ENCODE measurements at regions of chr3 and their contacts with region 1.

Region 1: DNA sequence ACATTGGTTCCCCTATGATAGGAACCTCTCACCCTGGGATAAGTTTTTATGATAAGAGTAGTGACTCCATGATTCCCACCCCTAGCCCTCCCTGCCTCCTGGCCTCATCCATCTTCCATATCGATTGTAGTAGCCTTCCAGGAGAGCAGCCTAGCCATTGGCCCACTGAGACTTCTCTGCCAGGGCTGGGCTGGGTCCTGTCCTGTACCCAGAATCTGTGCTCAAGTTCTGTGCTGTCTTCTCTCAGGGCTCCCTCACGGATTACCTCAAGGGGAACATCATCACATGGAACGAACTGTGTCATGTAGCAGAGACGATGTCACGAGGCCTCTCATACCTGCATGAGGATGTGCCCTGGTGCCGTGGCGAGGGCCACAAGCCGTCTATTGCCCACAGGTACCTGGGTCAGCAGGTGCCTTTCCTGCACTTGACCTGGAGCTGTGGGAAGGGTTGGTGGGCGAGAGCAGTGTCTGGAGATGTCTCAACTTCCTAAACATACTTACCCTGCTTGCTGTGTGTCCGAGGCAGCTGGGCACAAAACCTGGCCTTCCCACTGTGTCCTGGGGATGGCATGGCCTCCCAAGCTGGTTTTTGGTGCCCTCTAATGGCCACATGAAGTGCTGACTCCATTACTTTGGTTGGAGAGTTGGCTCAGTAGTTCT is 16.6 kb upstream of the EXOG start:
- DNase-seq: peak; percentile 58
- H3K4me3 Mint-ChIP-seq: no peak overlapping the region
- H3K27ac Mint-ChIP-seq: no peak overlapping the region
- H3K4me1 Mint-ChIP-seq: no peaks in the 10 kb centered on the region
- H3K27me3 Mint-ChIP-seq: no peaks in the 10 kb centered on the region

Region 2: GRCh38 chr3:37892927-37893600 is 586.5 kb before region 1 on chr3:
- CTCF ChIA-PET with region 1: no interaction called
- POLR2A ChIA-PET with region 1: no interaction called
- DNase-seq: no peak
- H3K4me3 Mint-ChIP-seq: no peak overlapping the region
- H3K27ac Mint-ChIP-seq: no peak overlapping the region
- H3K4me1 Mint-ChIP-seq: no peaks in the 10 kb centered on the region
- H3K27me3 Mint-ChIP-seq: peaks cover 6% of the 10 kb centered on the region

Region 3: DNA sequence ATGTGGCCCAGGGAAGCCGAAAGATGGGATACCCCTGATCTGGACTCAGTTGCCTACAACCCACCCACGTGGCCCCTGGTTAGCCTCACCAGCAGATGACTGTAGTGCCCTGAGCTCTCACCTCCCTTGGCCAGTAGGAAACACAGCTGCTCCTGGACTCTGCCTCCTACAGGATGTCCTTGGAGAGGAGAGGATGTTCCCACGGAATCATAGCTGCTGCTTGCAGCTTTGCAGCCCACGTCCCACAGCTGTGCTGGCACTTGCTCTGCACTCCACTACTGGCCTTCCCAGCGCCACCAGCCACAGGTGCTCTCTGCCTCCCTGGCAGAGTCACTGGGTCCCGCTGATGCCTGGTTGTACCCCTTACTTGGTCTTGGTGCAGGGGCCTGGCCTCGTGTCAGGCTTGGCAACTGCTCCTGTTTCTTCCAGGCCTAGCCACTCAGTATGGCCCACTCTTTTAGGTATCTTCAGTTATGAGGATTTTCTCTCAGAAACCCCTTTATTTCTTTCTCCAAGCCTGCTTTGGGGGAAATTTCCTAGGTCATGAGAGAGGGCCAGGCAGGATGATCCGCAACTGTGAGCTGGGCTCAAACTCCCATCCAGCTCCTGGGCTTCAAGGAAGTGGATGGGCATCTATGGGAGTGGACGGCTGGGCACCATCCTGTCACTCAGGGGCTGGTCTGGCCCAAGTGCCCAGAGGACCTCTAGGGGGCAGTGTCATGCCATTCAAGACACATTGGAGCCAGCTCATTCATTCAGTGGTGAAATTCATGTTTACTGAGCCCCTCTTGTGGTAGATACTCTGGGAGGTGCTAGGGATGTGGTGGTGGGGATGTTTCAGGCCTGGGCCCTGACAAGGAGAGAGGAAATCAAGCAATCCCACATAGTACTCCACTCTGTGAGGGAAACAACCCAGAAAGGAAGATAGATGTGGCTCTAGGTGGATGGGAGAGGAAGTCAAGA is 505.2 kb before region 1 on chr3:
- CTCF ChIA-PET with region 1: interaction called, 13 read pairs
- POLR2A ChIA-PET with region 1: no interaction called
- DNase-seq: peak; percentile 76
- H3K4me3 Mint-ChIP-seq: no peak overlapping the region
- H3K27ac Mint-ChIP-seq: no peak overlapping the region
- H3K4me1 Mint-ChIP-seq: peaks cover 6% of the 10 kb centered on the region
- H3K27me3 Mint-ChIP-seq: no peaks in the 10 kb centered on the region

Region 4: DNA sequence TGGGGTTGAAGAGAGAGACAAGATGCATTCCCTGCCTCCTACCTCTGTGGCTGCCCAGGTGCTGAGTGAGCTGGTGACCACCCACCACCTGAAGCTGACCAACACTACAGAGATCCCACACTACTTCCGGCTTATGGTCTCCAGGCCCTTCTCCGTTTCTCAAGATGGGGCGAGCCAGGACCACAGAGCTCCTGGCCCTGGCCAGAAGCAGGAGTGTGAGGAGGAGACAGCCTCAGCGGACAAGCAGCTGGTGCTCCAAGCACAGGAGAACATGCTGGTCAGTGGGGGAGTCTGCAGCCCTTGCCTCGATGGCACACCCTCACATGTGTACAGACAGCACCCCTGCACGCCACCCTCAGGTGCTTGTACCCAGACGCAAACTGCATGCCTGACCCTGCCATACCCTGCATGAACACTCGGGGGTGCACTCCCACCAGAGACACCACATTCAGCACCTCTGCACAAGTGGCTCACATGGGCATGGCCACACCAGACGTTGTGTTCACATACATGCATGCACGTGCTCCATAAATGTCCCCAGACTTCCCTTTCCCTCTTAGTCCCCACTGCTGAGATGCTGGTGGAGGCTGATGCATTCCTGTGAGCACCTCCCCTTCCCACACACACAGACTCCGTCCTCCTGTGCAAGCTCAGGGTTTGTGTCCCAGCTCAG is 361.7 kb before region 1 on chr3:
- CTCF ChIA-PET with region 1: interaction called, 24 read pairs
- POLR2A ChIA-PET with region 1: no interaction called
- DNase-seq: peak; percentile 81
- H3K4me3 Mint-ChIP-seq: no peak overlapping the region
- H3K27ac Mint-ChIP-seq: no peak overlapping the region
- H3K4me1 Mint-ChIP-seq: peaks cover 3% of the 10 kb centered on the region
- H3K27me3 Mint-ChIP-seq: no peaks in the 10 kb centered on the region

Region 5: DNA sequence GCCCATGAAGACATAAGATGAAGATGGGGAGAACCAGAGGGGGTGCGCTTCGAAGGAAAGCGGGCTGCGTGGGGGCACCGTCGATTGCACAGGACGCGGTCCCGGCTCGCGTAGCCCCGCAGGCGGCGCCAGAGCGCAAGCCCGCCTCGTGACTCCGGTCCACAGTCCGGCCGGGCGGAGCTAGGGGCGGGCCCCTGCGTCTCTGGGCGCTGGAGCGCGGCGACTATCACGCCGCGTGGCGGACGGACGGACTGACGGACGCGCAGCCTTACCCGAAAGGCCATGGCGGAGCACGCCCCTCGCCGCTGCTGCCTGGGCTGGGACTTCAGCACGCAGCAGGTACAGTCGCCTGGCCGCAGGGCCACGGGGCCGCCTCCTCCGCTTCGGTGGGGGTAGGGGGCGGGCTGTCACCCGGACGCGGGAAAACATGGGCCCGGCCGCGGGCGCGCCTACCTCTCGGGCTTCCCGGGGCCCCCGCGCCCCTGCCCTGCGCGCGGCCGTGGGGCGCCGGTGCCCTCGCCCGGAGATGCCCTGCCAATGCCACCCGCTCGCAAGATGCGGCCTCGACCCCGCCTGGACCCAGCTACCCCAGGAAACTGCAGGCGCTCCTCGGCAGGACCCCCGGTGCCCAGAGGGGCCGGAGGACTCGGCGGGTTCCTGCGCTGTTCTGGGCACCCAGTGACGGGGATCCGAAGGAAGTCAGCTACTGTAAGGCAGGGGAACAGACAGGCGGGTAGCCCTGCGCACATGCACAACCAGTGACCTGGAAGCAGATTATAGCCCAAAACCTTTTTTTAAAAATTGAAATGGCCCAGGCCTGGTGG is 132.8 kb before region 1 on chr3 and contains the start of gene XYLB:
- CTCF ChIA-PET with region 1: interaction called, 90 read pairs
- POLR2A ChIA-PET with region 1: interaction called, 3 read pairs
- DNase-seq: peak; percentile 84
- H3K4me3 Mint-ChIP-seq: peak within 1 kb of the TSS; percentile 71
- H3K27ac Mint-ChIP-seq: no peak within 1 kb of the TSS
- H3K4me1 Mint-ChIP-seq: peaks cover 23% of the 10 kb centered on the region
- H3K27me3 Mint-ChIP-seq: peaks cover 7% of the 10 kb centered on the region
- total RNA-seq, gene XYLB: 3.1 to 3.2 TPM

Region 6: GRCh38 chr3:38368238-38368637 is 111.3 kb before region 1 on chr3:
- CTCF ChIA-PET with region 1: interaction called, 10 read pairs
- POLR2A ChIA-PET with region 1: no interaction called
- DNase-seq: no peak
- H3K4me3 Mint-ChIP-seq: no peak overlapping the region
- H3K27ac Mint-ChIP-seq: no peak overlapping the region
- H3K4me1 Mint-ChIP-seq: peaks cover 23% of the 10 kb centered on the region
- H3K27me3 Mint-ChIP-seq: no peaks in the 10 kb centered on the region

Region 7: GRCh38 chr3:38496131-38496910 is 16.8 kb after region 1 on chr3 and contains the start of gene EXOG:
- CTCF ChIA-PET with region 1: interaction called, 13 read pairs
- POLR2A ChIA-PET with region 1: interaction called, 3 read pairs
- DNase-seq: peak; percentile 95
- H3K4me3 Mint-ChIP-seq: peak within 1 kb of the TSS; percentile 94
- H3K27ac Mint-ChIP-seq: peak within 1 kb of the TSS; percentile 79
- H3K4me1 Mint-ChIP-seq: peaks cover 30% of the 10 kb centered on the region
- H3K27me3 Mint-ChIP-seq: no peaks in the 10 kb centered on the region
- total RNA-seq, gene EXOG: 17.8 to 19.0 TPM

Measured in activated CD4-positive, alpha-beta memory T cell treated with anti-CD3 and anti-CD28 coated beads, Interleukin-2, amount 10 ng/mL, durations not matched to agents 7 days and 5 days (primary cell).